Mammary epithelial cell (primary cell): ENCODE measurements at regions of chr18 and their contacts with region 1.

Region 1: GRCh38 chr18:50194631-50195532 is at the start of gene MYO5B:
- DNase-seq: peak; percentile 89
- H3K4me3 ChIP-seq: peak within 1 kb of the TSS; percentile 57 to 72 (median 69)
- H3K27ac ChIP-seq: peak within 1 kb of the TSS; percentile 69
- H3K4me1 ChIP-seq: peaks cover 32% of the 10 kb centered on the region
- H3K27me3 ChIP-seq: peaks cover 2% of the 10 kb centered on the region
- CTCF ChIP-seq: peak; percentile 30 to 41
- total RNA-seq, gene MYO5B: 29.8 to 31.7 TPM

Region 2: DNA sequence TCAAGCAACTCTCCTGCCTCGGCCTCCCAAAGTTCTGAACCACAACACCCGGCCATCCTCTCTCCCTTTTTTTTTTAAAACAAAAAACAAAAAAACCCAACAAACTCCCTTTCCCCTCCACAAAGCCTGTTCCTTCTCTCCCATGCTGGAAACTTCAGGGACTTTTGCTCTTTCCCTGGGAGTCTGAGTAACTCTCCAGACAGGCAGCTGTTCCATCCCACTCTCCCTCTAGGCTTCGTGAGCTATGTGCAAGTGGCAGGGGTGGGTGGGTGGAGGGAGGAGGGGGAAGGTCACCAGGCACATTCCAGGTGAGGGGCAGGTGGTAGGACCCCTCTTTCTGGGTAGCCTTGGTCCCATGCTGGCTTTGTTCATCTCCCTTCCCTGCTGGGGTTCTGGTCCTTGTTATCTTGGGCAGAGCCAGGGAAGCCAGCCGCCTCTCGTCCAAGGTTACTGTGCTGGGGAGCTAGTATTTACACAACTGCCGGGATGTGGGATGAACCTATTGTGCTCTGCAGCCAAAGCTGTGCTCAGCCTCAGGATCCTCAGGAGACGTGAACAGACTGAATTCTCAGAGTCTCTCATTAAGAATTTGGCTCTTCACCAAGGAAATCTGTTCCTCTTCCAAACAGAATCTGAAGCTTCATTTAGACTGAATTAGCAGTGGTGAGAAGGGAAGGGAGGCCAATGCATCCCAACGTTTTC is 526.2 kb before region 1 on chr18:
- CTCF ChIA-PET with region 1: no interaction called
- dilution Hi-C with region 1: no loop called
- in situ Hi-C with region 1: no loop called
- intact Hi-C with region 1: no loop called
- DNase-seq: no peak
- H3K4me3 ChIP-seq: no peak overlapping the region
- H3K27ac ChIP-seq: no peak overlapping the region
- H3K4me1 ChIP-seq: no peaks in the 10 kb centered on the region
- H3K27me3 ChIP-seq: peaks cover 5% of the 10 kb centered on the region
- CTCF ChIP-seq: no peak

Region 3: GRCh38 chr18:49839012-49839411 is 355.9 kb before region 1 on chr18:
- CTCF ChIA-PET with region 1: no interaction called
- dilution Hi-C with region 1: no loop called
- in situ Hi-C with region 1: no loop called
- intact Hi-C with region 1: no loop called
- DNase-seq: peak; percentile 66
- H3K4me3 ChIP-seq: no peak overlapping the region
- H3K27ac ChIP-seq: peak overlapping the region; percentile 20
- H3K4me1 ChIP-seq: peaks cover 20% of the 10 kb centered on the region
- H3K27me3 ChIP-seq: no peaks in the 10 kb centered on the region
- CTCF ChIP-seq: no peak

Region 4: GRCh38 chr18:49865401-49865800 is 329.5 kb before region 1 on chr18:
- CTCF ChIA-PET with region 1: no interaction called
- dilution Hi-C with region 1: no loop called
- in situ Hi-C with region 1: no loop called
- intact Hi-C with region 1: loop called (anchors 1 kb)
- DNase-seq: no peak
- H3K4me3 ChIP-seq: no peak overlapping the region
- H3K27ac ChIP-seq: no peak overlapping the region
- H3K4me1 ChIP-seq: no peaks in the 10 kb centered on the region
- H3K27me3 ChIP-seq: no peaks in the 10 kb centered on the region
- CTCF ChIP-seq: no peak

Region 5: GRCh38 chr18:50009773-50010335 is 185.0 kb before region 1 on chr18:
- CTCF ChIA-PET with region 1: no interaction called
- dilution Hi-C with region 1: no loop called
- in situ Hi-C with region 1: no loop called
- intact Hi-C with region 1: loop called (anchors 1 kb)
- DNase-seq: peak; percentile 52
- H3K4me3 ChIP-seq: no peak overlapping the region
- H3K27ac ChIP-seq: no peak overlapping the region
- H3K4me1 ChIP-seq: peaks cover 16% of the 10 kb centered on the region
- H3K27me3 ChIP-seq: no peaks in the 10 kb centered on the region
- CTCF ChIP-seq: peak; percentile 64 to 78

Region 6: DNA sequence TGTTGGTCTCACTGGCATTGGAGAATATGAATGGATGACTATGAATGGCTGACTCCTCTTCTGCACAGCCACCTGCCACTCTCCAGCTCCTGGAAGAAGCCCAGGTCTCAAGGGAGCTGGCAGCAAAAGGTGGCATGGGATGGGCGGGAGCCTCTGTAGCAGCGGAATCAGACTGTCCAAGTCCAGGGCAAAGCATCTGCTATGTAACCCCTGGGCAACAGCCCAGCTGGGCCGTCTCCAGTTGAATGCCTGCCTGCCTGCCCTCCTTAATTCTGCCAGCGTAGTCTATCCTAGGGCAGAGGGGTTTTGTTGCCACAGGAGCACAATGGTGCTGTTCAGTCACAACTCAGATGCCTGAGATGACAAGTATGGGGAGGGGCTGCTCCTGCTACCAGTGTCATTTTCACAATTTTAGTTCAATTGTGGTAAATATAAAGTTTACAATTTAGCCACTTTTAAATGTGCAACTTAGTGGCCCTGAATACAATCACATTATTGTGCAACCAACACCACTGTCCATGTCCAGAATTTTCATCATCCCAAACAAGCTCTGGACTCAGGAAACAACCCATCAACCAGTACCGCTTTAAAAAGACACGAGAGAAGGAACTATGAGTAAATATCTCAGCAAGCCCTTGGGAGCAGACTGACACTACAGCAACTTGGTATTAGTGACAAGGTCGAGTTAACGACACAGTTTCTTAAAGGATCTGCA is 115.1 kb before region 1 on chr18:
- CTCF ChIA-PET with region 1: interaction called, 5 read pairs
- dilution Hi-C with region 1: no loop called
- in situ Hi-C with region 1: no loop called
- intact Hi-C with region 1: loop called (anchors 1 kb)
- DNase-seq: no peak
- H3K4me3 ChIP-seq: no peak overlapping the region
- H3K27ac ChIP-seq: no peak overlapping the region
- H3K4me1 ChIP-seq: peaks cover 25% of the 10 kb centered on the region
- H3K27me3 ChIP-seq: no peaks in the 10 kb centered on the region
- CTCF ChIP-seq: no peak

Region 7: GRCh38 chr18:50111265-50111792 is 83.6 kb before region 1 on chr18:
- CTCF ChIA-PET with region 1: no interaction called
- dilution Hi-C with region 1: no loop called
- in situ Hi-C with region 1: loop called (anchors 10 kb)
- intact Hi-C with region 1: loop called (anchors 1 kb)
- DNase-seq: no peak
- H3K4me3 ChIP-seq: no peak overlapping the region
- H3K27ac ChIP-seq: no peak overlapping the region
- H3K4me1 ChIP-seq: no peaks in the 10 kb centered on the region
- H3K27me3 ChIP-seq: no peaks in the 10 kb centered on the region
- CTCF ChIP-seq: peak; percentile 30 to 50

Region 8: GRCh38 chr18:50161597-50162561 is 33.0 kb before region 1 on chr18:
- CTCF ChIA-PET with region 1: no interaction called
- dilution Hi-C with region 1: no loop called
- in situ Hi-C with region 1: no loop called
- intact Hi-C with region 1: loop called (anchors 2 kb)
- DNase-seq: peak; percentile 91
- H3K4me3 ChIP-seq: no peak overlapping the region
- H3K27ac ChIP-seq: peak overlapping the region; percentile 14
- H3K4me1 ChIP-seq: peaks cover 18% of the 10 kb centered on the region
- H3K27me3 ChIP-seq: no peaks in the 10 kb centered on the region
- CTCF ChIP-seq: no peak

Region 9: DNA sequence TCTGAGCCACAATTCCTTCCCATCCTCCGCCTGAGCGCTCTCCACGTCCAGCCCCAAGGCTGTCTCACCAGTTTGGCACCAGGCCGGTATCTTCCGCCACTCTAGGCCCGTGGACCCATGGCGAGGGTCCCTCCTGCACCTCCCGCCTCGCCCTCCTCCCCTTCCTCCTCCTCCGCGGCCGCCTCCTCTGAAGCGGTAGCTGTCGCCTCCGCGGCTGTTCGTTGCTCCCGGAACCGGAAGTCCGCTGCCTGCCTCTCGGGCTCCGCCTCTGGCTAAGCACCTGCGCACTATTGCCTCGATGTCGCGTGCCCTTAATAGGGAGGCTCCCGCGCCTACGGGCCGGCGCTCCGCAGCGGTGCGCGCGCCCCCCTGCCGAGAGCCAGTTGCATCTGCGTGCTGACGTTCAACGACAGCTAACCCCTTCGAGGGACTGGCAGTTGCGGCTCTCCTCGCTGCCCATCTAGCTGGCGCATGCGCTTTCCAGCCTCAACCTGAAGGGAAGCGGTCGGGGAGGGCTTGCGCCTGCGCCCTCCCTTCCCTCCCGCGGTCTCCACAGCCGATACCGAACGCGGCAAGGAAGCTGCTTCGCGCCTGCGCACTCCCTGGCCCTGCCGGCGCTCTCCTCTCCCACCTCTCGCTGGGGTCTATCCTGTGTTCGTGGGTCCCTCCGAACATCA is 86.6 kb after region 1 on chr18 and contains the start of gene MBD1:
- CTCF ChIA-PET with region 1: no interaction called
- dilution Hi-C with region 1: no loop called
- in situ Hi-C with region 1: no loop called
- intact Hi-C with region 1: no loop called
- DNase-seq: peak; percentile 98
- H3K4me3 ChIP-seq: peak within 1 kb of the TSS; percentile 81 to 100 (median 98)
- H3K27ac ChIP-seq: peak within 1 kb of the TSS; percentile 86
- H3K4me1 ChIP-seq: peaks cover 57% of the 10 kb centered on the region
- H3K27me3 ChIP-seq: no peaks in the 10 kb centered on the region
- CTCF ChIP-seq: peak in 1 of 2 donors; percentile 26
- total RNA-seq, gene MBD1: 102 to 196 TPM